OCI-LY7 (cell line): ENCODE measurements at regions of chr3 and their contacts with region 1.

Region 1: GRCh38 chr3:55376753-55377347 is 110.3 kb downstream of the WNT5A start:
- DNase-seq: peak; percentile 85
- H3K4me3 ChIP-seq: peak overlapping the region; percentile 29
- H3K27ac ChIP-seq: peak overlapping the region; percentile 48
- H3K4me1 ChIP-seq: peaks cover 37% of the 10 kb centered on the region
- CTCF ChIP-seq: 0 out of 2 replicates have a peak, but pooled peaks have one; percentile 14

Region 2: GRCh38 chr3:55218577-55218976 is 158.3 kb before region 1 on chr3:
- CTCF ChIA-PET with region 1: no interaction called
- POLR2A ChIA-PET with region 1: no interaction called
- intact Hi-C with region 1: loop called (anchors 2 kb)
- DNase-seq: peak; percentile 18
- H3K4me3 ChIP-seq: no peak overlapping the region
- H3K27ac ChIP-seq: peak overlapping the region; percentile 94
- H3K4me1 ChIP-seq: peaks cover 54% of the 10 kb centered on the region
- CTCF ChIP-seq: no peak